ENCODE measurements at regions of chr2 and their contacts with region 1.

Region 1: GRCh38 chr2:8259106-8259840 is 422.6 kb upstream of the ID2 start:
- DNase-seq: no peak
- ATAC-seq: no peak
- H3K4me3 ChIP-seq: no peak overlapping the region
- H3K4me3 Mint-ChIP-seq: no peak overlapping the region
- H3K27ac ChIP-seq: no peak overlapping the region
- H3K27ac Mint-ChIP-seq: no peak overlapping the region
- H3K4me1 ChIP-seq: no peaks in the 10 kb centered on the region
- H3K4me1 Mint-ChIP-seq: peaks cover 5% of the 10 kb centered on the region
- H3K27me3 ChIP-seq: no peaks in the 10 kb centered on the region
- H3K27me3 Mint-ChIP-seq: no peaks in the 10 kb centered on the region
- CTCF ChIP-seq: no peak

Region 2: DNA sequence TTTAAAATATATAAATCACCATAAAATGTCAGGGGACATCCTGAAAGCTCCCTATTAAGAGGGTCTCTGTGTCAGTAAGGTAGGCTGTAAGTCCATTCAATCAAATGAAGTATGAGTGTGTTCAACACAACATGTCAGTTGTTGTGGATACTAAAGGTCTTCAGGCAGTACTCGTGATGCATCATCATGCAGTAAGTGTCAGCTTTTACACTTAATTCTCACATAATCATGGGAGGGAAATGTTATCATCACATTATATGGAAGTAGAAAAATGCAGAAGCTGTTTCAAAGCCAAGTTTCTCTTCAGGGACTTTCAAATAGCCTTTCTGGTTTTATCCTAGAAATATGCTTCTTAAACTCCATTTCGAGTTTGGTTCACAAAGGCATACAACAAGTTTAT is 54.6 kb before region 1 on chr2:
- CTCF ChIA-PET with region 1: no interaction called
- POLR2A ChIA-PET with region 1: no interaction called
- intact Hi-C with region 1: loop called in 1 of 2 experiments (anchors 5 kb)
- DNase-seq: no peak
- ATAC-seq: no peak
- H3K4me3 ChIP-seq: no peak overlapping the region
- H3K4me3 Mint-ChIP-seq: no peak overlapping the region
- H3K27ac ChIP-seq: no peak overlapping the region
- H3K27ac Mint-ChIP-seq: no peak overlapping the region
- H3K4me1 ChIP-seq: no peaks in the 10 kb centered on the region
- H3K4me1 Mint-ChIP-seq: no peaks in the 10 kb centered on the region
- H3K27me3 ChIP-seq: no peaks in the 10 kb centered on the region
- H3K27me3 Mint-ChIP-seq: no peaks in the 10 kb centered on the region
- CTCF ChIP-seq: no peak